ENCODE measurements at regions of chr7 and their contacts with region 1.

Region 1: GRCh38 chr7:16918288-16918895 is 36.6 kb upstream of the AGR3 start:
- DNase-seq: no peak
- ATAC-seq: no peak

Region 2: GRCh38 chr7:16083931-16084330 is 834.5 kb before region 1 on chr7:
- intact Hi-C with region 1: loop called (anchors 10 kb)
- DNase-seq: no peak
- ATAC-seq: no peak

Region 3: DNA sequence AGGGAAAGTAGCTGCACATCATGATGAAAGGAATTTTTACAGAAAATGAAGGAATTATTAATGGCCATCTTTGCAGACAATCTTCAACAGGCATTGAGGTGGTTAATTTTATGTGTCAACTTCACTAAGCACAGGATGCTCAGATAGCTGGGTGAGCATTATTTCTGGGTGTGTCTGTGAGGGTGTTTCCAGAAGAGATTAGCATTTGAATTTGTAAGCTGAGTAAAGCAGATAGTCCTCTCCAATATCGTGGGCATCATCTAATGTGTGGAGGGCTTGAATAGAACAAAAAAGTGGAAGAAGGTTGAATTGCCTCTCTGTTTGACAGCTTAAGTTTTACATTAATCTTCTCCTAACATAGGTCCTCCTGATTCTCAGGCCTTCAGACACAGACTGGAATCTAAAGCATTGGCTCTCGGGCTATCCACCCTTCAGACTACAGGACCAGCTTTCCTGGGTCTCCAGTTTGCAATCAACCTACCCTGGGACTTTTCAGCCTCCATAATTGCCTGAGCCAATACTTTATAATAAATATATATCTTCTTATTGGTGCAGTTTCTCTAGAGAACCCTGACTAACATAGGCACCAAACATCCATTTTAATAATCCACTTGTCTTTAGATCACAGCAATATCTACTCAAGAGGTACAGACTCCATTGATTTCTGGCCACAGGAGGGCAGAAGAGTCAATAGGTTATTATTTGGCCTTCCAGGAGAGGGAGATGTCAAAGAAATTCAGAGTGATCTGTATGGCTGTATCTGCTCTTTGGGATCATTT is 486.6 kb before region 1 on chr7:
- intact Hi-C with region 1: loop called (anchors 10 kb)
- DNase-seq: no peak
- ATAC-seq: peak; percentile 68

Region 4: DNA sequence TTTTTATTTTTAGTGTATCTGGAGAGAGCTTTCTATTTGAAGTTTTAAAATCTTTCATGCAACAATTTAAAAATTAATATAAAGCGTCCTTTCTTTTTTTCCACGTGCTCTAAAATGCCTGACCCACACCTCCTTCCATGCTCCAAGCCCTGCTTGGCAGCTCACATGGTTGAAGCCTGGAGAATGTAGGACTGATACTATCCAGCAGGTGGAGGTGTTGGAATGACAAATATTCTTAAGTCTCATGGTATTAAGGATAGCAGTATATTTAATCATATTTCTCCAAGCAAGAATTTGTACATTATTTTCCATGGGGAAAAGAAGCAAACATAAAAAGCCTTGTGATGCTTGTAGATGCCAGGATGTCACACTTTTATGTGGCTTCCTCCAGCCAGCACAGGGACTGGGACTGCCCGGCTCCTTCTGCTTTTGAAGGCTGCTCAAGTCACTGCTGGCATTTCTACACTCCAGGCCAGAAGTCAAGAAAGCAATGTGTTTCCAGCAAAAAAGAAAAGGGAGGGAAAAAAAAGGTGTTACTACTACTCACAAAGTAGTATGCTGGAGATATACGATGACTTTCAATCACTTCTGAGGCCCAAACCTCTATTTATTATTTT is 222.7 kb before region 1 on chr7:
- intact Hi-C with region 1: loop called (anchors 5 kb)
- DNase-seq: no peak
- ATAC-seq: peak; percentile 51

Region 5: GRCh38 chr7:16801111-16801542 is 117.3 kb before region 1 on chr7:
- intact Hi-C with region 1: loop called (anchors 5 kb)
- DNase-seq: no peak
- ATAC-seq: no peak

Region 6: GRCh38 chr7:17009007-17009719 is 90.8 kb after region 1 on chr7:
- intact Hi-C with region 1: no loop called
- DNase-seq: no peak
- ATAC-seq: peak; percentile 68

Measured in Right ventricle myocardium inferior (tissue), 1 donor.